Caco-2 (cell line): ENCODE measurements at regions of chr20 and their contacts with region 1.

Region 1: GRCh38 chr20:62368976-62369814 is 2.1 kb upstream of the LAMA5 start:
- DNase-seq: peak in 1 of 2 experiments; percentile 72
- H3K4me3 ChIP-seq: peak overlapping the region; percentile 94
- H3K4me3 Mint-ChIP-seq: peak overlapping the region; percentile 70
- H3K27ac Mint-ChIP-seq: peak overlapping the region; percentile 90
- H3K4me1 ChIP-seq: peaks cover 55% of the 10 kb centered on the region
- H3K4me1 Mint-ChIP-seq: peaks cover 39% of the 10 kb centered on the region
- H3K27me3 ChIP-seq: no peaks in the 10 kb centered on the region
- H3K27me3 Mint-ChIP-seq: no peaks in the 10 kb centered on the region
- CTCF ChIP-seq: peak; percentile 54 to 77

Region 2: DNA sequence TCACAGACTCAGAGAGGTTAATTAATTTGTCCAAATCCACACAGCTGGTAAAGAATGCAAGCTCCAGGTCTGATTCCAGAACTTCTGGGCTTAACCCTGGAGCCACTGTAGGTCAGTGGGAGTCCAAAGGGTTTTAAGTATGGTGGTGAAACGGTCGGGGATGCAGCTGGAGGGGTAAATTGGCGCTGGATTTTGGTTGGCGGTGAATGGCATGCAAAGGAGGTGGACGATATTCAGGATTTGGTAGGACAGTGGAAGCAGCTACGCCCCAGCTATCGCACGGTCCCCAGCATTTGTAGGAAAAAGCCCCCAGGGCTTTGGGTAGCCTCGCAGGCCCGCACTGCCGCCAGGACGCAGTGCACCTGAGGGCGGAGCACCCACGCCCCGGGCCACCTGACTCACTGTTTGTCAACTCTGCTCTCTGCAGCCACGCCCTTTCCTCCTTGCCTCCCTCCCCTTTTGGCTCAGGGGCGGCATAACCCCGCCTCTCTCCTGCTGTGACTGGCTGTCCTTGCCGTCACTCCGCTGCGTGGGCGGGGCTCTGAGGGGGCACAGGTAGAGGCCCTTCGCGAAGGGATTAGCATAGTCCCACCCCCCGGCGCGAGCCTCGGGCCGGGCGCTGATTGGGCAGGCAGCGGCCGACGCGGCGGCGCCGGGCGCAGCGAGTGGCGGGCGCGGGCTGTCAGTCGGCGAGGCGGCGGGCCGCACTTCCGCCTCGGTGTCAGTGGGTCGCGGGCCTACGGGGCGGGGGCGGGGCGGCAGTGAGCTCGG is 131.2 kb before region 1 on chr20 and contains the start of gene OSBPL2:
- CTCF ChIA-PET with region 1: no interaction called
- POLR2A ChIA-PET with region 1: interaction called, 4 read pairs
- intact Hi-C with region 1: loop called (anchors 5 kb)
- DNase-seq: peak; percentile 100
- H3K4me3 ChIP-seq: peak within 1 kb of the TSS; percentile 89
- H3K4me3 Mint-ChIP-seq: peak within 1 kb of the TSS; percentile 67
- H3K27ac Mint-ChIP-seq: peak within 1 kb of the TSS; percentile 85
- H3K4me1 ChIP-seq: peaks cover 11% of the 10 kb centered on the region
- H3K4me1 Mint-ChIP-seq: peaks cover 7% of the 10 kb centered on the region
- H3K27me3 ChIP-seq: no peaks in the 10 kb centered on the region
- H3K27me3 Mint-ChIP-seq: no peaks in the 10 kb centered on the region
- CTCF ChIP-seq: no peak
- total RNA-seq, gene OSBPL2: 130 and 132 TPM in 2 replicates

Region 3: DNA sequence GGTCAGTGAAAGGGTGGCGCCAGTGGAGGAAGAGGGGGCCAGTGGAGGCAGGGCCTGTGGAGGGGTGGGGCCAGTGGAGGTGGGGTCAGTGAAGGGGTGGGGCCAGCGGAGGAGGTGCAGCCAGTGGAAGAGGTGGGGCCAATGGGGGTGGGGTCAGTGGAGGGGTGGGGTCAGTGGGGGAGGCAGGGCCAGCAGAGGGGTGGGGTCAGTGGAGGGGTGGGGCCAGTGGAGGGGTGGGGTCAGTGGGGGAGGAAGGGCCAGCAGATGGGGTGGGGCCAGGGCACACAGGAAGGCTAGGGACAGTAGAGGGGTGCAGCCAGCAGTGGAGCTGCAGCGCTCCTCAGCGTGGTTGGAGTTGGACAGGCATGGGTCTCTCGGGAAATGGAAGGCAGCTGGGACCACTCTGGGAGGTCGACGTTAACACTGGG is 47.7 kb before region 1 on chr20:
- CTCF ChIA-PET with region 1: no interaction called
- POLR2A ChIA-PET with region 1: no interaction called
- intact Hi-C with region 1: no loop called
- DNase-seq: peak; percentile 77 to 88
- H3K4me3 ChIP-seq: no peak overlapping the region
- H3K4me3 Mint-ChIP-seq: no peak overlapping the region
- H3K27ac Mint-ChIP-seq: no peak overlapping the region
- H3K4me1 ChIP-seq: no peaks in the 10 kb centered on the region
- H3K4me1 Mint-ChIP-seq: no peaks in the 10 kb centered on the region
- H3K27me3 ChIP-seq: no peaks in the 10 kb centered on the region
- H3K27me3 Mint-ChIP-seq: no peaks in the 10 kb centered on the region
- CTCF ChIP-seq: no peak

Region 4: DNA sequence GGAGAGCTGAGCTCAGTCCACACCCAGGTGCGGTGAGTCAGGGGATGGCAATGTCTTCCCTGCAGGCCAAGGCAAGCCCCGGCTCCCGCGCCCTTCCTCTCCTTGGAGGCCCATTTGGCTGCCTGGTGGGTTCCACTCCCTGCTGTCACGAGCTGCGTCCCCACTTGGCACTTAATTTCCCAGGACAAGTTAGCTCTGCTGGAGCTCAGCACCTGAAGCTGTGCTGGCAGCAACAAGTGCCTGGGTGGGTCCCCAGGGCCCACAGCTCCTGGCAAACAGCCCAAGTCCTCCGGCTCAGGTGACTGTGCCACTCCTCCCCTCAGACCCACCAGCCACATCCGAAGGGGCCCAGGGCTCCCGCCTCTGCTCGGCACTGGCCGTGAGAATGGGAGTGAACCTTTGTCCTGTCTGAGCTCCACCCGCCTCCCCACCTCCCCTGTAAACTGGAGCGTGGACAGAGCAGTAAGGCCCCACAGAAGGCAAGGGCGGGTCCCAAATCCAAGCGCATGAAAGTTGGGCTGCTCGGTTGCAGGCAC is 19.0 kb before region 1 on chr20:
- CTCF ChIA-PET with region 1: interaction called, 9 read pairs
- POLR2A ChIA-PET with region 1: interaction called, 13 read pairs
- intact Hi-C with region 1: no loop called
- DNase-seq: peak; percentile 87 to 94
- H3K4me3 ChIP-seq: no peak overlapping the region
- H3K4me3 Mint-ChIP-seq: peak overlapping the region; percentile 23
- H3K27ac Mint-ChIP-seq: peak overlapping the region; percentile 92
- H3K4me1 ChIP-seq: peaks cover 35% of the 10 kb centered on the region
- H3K4me1 Mint-ChIP-seq: peaks cover 7% of the 10 kb centered on the region
- H3K27me3 ChIP-seq: no peaks in the 10 kb centered on the region
- H3K27me3 Mint-ChIP-seq: no peaks in the 10 kb centered on the region
- CTCF ChIP-seq: no peak

Region 5: DNA sequence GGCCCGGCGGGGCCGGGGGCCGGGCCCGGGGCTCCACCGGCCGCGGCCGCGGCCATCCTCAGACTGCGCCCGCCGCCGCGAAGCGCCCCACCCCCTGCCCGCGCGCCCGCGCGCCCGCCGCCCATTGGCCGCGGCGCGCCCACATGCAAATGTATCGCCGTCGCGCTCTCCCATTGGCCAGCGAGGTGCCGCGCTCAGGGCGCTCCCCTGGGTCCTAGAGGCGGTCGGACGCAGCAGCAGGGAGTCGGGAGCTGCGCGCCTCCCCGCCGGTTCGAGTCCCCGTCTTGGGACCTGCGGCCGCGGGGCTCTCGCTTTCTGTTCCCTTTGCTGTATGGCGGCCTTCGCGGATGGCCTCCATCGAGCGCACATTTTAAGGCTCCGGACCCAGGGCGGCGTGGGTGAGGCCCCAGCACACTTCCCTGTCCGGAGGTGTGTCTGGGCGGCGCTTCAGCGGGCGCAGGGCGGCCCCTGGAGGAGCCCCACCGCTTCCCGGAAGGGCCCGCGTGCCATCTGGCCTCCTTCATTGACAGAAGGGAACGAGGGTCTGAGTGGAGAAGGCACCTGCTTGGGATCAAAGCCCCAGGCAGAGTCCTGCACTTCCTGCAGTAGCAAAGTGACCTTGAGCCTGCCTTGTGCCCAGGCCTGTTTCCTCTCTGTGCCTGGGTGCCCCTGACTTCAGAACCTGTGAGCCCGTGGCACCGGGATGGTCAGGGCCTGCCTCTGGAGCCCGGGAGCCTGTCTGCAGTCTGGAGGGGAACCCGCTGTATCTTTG is 38.2 kb after region 1 on chr20 and contains the start of gene CABLES2:
- CTCF ChIA-PET with region 1: interaction called, 5 read pairs
- POLR2A ChIA-PET with region 1: interaction called, 3 read pairs
- intact Hi-C with region 1: loop called (anchors 2 kb)
- DNase-seq: peak; percentile 99 to 100
- H3K4me3 ChIP-seq: peak within 1 kb of the TSS; percentile 95
- H3K4me3 Mint-ChIP-seq: peak within 1 kb of the TSS; percentile 78
- H3K27ac Mint-ChIP-seq: peak within 1 kb of the TSS; percentile 83
- H3K4me1 ChIP-seq: peaks cover 58% of the 10 kb centered on the region
- H3K4me1 Mint-ChIP-seq: peaks cover 41% of the 10 kb centered on the region
- H3K27me3 ChIP-seq: no peaks in the 10 kb centered on the region
- H3K27me3 Mint-ChIP-seq: no peaks in the 10 kb centered on the region
- CTCF ChIP-seq: peak in 1 of 2 experiments; percentile 54
- total RNA-seq, gene CABLES2: 30.7 and 36.4 TPM in 2 replicates